CD4-positive, alpha-beta memory T cell (primary cell): ENCODE measurements at regions of chr16 and their contacts with region 1.

Region 1: GRCh38 chr16:67399181-67399733 is 6.0 kb upstream of the TPPP3 start:
- DNase-seq: peak in 2 of 5 donors; percentile 40 to 43
- H3K4me3 ChIP-seq: no peak overlapping the region
- H3K4me3 Mint-ChIP-seq: no peak overlapping the region
- H3K27ac ChIP-seq: no peak overlapping the region
- H3K27ac Mint-ChIP-seq: peak overlapping the region in 1 of 7 donors; percentile 9
- H3K4me1 ChIP-seq: peaks cover 7% of the 10 kb centered on the region
- H3K4me1 Mint-ChIP-seq: peaks cover 0 to 1% (median under 1%) of the 10 kb centered on the region in 4 donors
- H3K27me3 ChIP-seq: peaks cover 7% of the 10 kb centered on the region
- H3K27me3 Mint-ChIP-seq: peaks cover 8 to 23% of the 10 kb centered on the region in 2 donors

Region 2: DNA sequence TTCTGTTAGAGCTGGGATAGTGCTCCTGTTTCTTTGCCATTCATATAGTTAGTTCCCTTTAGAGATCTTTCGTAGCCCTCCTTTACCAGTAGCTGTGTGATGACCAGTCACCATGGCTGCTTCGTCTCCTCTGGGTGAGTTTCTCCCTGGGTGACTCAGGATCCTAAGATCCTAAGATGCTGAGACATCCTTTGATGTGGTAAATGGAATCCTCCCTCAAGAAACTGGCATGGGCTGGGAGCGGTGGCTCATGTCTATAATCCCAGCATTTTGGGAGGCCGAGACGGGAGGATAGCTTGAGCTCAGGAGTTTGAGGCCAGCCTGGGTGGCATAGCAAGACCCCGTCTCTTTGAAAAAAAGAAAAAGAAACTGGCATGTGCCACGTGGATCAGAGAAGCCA is 283.6 kb before region 1 on chr16:
- CTCF ChIA-PET with region 1: no interaction called
- POLR2A ChIA-PET with region 1: no interaction called
- intact Hi-C with region 1: no loop called
- DNase-seq: no peak
- H3K4me3 ChIP-seq: no peak overlapping the region
- H3K4me3 Mint-ChIP-seq: no peak overlapping the region
- H3K27ac ChIP-seq: no peak overlapping the region
- H3K27ac Mint-ChIP-seq: peak overlapping the region in 1 of 7 donors; percentile 32
- H3K4me1 ChIP-seq: peaks cover 17% of the 10 kb centered on the region
- H3K4me1 Mint-ChIP-seq: peaks cover 25 to 56% (median 33%) of the 10 kb centered on the region in 4 donors
- H3K27me3 ChIP-seq: no peaks in the 10 kb centered on the region
- H3K27me3 Mint-ChIP-seq: no peaks in the 10 kb centered on the region

Region 3: GRCh38 chr16:67279296-67280089 is 119.8 kb before region 1 on chr16 and contains the start of gene PLEKHG4:
- CTCF ChIA-PET with region 1: interaction called, 3 read pairs
- POLR2A ChIA-PET with region 1: no interaction called
- intact Hi-C with region 1: loop called (anchors 5 kb)
- DNase-seq: peak; percentile 74 to 80 (median 78)
- H3K4me3 ChIP-seq: peak within 1 kb of the TSS; percentile 52 to 68
- H3K4me3 Mint-ChIP-seq: peak within 1 kb of the TSS; percentile 81 to 89 (median 84)
- H3K27ac ChIP-seq: peak within 1 kb of the TSS; percentile 40
- H3K27ac Mint-ChIP-seq: peak within 1 kb of the TSS; percentile 57 to 92 (median 78)
- H3K4me1 ChIP-seq: peaks cover 20% of the 10 kb centered on the region
- H3K4me1 Mint-ChIP-seq: peaks cover 3 to 26% (median 15%) of the 10 kb centered on the region in 4 donors
- H3K27me3 ChIP-seq: no peaks in the 10 kb centered on the region
- H3K27me3 Mint-ChIP-seq: no peaks in the 10 kb centered on the region
- total RNA-seq, gene PLEKHG4: 17.3 to 24.0 TPM